Activated B cell treated with CpG ODN at 0.5 μM for 24 hours (primary cell): ENCODE measurements at regions of chr2 and their contacts with region 1.

Region 1: DNA sequence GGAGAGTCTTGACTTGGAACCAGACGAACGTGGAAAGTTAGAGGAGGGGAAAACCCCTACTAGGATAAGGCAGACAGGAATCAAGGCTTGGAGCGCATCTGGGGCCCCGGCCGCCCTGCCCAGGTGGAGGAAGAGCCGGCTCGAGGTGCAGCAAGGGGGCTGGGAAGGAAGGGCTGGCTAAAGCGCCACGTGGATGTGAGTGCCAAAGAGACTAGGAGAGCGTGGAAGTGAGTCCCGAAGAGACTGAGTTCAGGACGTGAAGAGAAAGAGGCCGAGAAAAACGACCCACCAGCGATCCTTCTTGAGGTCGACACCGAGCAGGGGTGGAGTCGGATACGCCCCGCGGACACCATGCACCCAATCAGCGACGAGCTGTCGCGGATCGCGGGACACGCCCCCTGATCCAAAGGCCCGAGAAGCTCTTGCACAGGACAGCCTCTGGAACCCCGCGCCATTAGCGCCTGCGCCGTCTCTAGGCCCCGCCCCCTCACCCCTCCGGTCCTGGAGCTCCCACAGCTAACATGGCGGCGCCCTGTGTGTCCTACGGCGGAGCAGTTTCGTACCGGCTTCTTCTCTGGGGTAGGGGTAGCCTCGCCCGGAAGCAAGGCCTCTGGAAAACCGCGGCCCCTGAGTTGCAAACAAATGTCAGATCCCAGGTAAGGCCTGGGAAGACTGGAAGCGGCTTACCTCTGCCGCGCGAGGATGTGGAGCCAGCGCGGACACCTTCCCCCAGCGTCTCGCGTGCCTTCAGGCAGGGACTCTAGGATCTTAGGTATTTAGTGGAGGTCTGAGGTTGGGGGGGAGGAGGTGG is at the start of gene MRPS9:
- DNase-seq: peak; percentile 92
- ATAC-seq: peak; percentile 98
- H3K4me3 Mint-ChIP-seq: peak within 1 kb of the TSS; percentile 99
- H3K27ac Mint-ChIP-seq: peak within 1 kb of the TSS; percentile 95
- H3K4me1 Mint-ChIP-seq: peaks cover 36% of the 10 kb centered on the region
- H3K27me3 Mint-ChIP-seq: no peaks in the 10 kb centered on the region
- CTCF ChIP-seq: no peak
- total RNA-seq, gene MRPS9: 26.5 and 29.1 TPM in 2 replicates

Region 2: DNA sequence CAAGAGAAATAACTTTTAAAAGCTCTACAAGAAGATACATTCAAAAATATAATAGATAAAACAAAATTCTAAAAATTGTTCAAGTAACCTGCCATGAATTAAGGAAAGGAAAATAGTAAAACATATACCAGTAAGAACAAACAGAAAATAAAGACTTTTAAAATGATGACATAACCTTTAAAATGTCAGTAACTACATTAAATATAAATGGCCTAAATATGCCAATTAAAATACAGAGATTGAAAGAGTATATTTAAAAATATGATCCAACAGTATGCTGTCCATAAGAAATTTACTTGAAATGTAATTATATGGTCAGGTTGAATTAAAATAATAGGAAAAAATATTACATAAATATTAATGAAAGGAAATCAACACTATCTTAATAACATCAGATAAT is 1095.6 kb before region 1 on chr2:
- CTCF ChIA-PET with region 1: no interaction called
- POLR2A ChIA-PET with region 1: no interaction called
- intact Hi-C with region 1: no loop called
- DNase-seq: no peak
- ATAC-seq: no peak
- H3K4me3 Mint-ChIP-seq: no peak overlapping the region
- H3K27ac Mint-ChIP-seq: no peak overlapping the region
- H3K4me1 Mint-ChIP-seq: no peaks in the 10 kb centered on the region
- H3K27me3 Mint-ChIP-seq: no peaks in the 10 kb centered on the region
- CTCF ChIP-seq: no peak

Region 3: GRCh38 chr2:104849618-104850141 is 188.1 kb before region 1 on chr2:
- CTCF ChIA-PET with region 1: no interaction called
- POLR2A ChIA-PET with region 1: no interaction called
- intact Hi-C with region 1: loop called (anchors 5 kb)
- DNase-seq: no peak
- ATAC-seq: no peak
- H3K4me3 Mint-ChIP-seq: no peak overlapping the region
- H3K27ac Mint-ChIP-seq: peak overlapping the region; percentile 14
- H3K4me1 Mint-ChIP-seq: peaks cover 30% of the 10 kb centered on the region
- H3K27me3 Mint-ChIP-seq: peaks cover 84% of the 10 kb centered on the region
- CTCF ChIP-seq: no peak

Region 4: DNA sequence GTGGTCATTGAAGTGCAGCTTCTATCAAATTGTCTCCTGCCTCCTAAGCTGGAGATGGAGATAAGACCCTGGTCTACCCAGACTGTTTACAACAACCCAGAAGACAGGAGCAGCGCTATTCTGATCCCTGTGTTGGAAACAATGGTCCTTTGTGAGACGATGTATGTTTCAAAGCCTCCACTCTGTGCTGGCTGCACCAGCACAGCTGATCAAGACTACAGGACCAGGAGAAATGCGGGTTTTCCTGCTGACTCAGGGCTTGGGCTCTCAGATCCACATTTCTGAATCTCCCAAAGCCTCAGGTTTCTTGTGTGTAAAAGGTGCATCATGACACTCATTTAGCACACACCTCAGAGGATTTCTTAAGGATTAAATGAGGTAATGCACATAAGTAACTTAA is 91.9 kb before region 1 on chr2:
- CTCF ChIA-PET with region 1: no interaction called
- POLR2A ChIA-PET with region 1: no interaction called
- intact Hi-C with region 1: no loop called
- DNase-seq: no peak
- ATAC-seq: no peak
- H3K4me3 Mint-ChIP-seq: no peak overlapping the region
- H3K27ac Mint-ChIP-seq: no peak overlapping the region
- H3K4me1 Mint-ChIP-seq: peaks cover 2% of the 10 kb centered on the region
- H3K27me3 Mint-ChIP-seq: peaks cover 12% of the 10 kb centered on the region
- CTCF ChIP-seq: no peak

Region 5: GRCh38 chr2:104983980-104984379 is 53.8 kb before region 1 on chr2:
- CTCF ChIA-PET with region 1: no interaction called
- POLR2A ChIA-PET with region 1: no interaction called
- intact Hi-C with region 1: no loop called
- DNase-seq: no peak
- ATAC-seq: no peak
- H3K4me3 Mint-ChIP-seq: no peak overlapping the region
- H3K27ac Mint-ChIP-seq: no peak overlapping the region
- H3K4me1 Mint-ChIP-seq: no peaks in the 10 kb centered on the region
- H3K27me3 Mint-ChIP-seq: peaks cover 8% of the 10 kb centered on the region
- CTCF ChIP-seq: no peak

Region 6: DNA sequence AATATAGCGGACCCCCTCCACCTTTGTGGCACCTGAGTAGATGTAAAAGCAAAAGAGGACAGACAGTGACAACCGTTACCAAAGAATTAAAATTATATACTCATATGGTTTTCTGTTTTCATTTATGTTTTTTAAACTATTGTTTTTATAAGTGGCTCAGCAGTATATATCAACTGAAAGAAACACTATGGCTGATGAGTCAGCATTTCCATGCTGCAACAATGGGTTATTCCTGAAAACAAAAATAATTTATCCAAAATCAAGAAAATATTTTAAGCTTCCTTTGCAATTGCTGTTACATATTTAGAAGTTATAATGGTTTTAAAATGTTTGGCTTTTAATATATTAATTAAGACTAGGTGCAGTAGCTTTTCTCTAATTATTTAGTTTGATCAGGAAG is 17.8 kb after region 1 on chr2:
- CTCF ChIA-PET with region 1: no interaction called
- POLR2A ChIA-PET with region 1: no interaction called
- intact Hi-C with region 1: loop called (anchors 2 kb)
- DNase-seq: no peak
- ATAC-seq: no peak
- H3K4me3 Mint-ChIP-seq: no peak overlapping the region
- H3K27ac Mint-ChIP-seq: no peak overlapping the region
- H3K4me1 Mint-ChIP-seq: peaks cover 8% of the 10 kb centered on the region
- H3K27me3 Mint-ChIP-seq: no peaks in the 10 kb centered on the region
- CTCF ChIP-seq: no peak

Region 7: DNA sequence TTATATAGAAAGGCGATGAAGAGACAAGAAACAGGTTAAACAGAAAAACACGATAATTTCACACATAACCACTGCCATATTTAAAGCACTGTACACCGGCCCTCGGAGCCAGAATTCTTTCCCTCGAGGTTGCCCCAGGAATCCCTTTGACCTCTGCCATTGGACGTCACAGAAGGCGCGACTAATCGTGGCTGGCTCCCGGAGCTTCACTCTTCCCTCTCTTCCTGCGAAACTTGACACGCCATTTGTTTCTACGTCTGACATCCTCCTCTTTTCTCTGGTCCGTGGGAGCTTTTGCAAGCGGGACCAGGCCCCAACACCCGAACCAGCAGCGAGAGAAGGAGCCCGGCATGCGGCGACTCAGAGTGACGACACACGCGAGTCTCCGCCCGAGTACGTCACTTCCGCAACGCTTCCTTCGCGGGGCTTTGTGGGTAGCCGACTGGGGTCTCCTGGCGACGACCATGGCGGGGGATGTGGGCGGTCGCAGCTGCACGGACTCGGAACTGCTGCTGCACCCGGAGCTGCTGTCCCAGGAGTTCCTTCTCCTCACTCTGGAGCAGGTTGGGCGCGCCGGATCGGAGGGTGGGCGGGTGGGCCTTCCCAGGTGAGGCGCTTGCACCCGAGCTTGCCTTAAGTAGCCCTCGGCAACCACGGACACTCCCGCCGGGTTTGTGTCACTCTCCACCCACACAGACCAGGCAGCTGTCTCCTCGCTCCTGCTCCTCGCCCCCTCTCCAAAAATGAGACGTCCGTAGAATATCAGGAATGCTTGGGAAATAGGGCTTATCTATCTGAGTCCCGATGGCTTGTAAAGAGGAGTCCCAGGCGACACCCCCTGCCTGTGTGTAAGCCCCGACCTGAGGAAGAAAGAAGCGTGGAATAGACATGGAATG is 299.6 kb after region 1 on chr2 and contains the start of gene C2orf49:
- CTCF ChIA-PET with region 1: no interaction called
- POLR2A ChIA-PET with region 1: no interaction called
- intact Hi-C with region 1: loop called (anchors 5 kb)
- DNase-seq: peak; percentile 89
- ATAC-seq: peak; percentile 93
- H3K4me3 Mint-ChIP-seq: peak within 1 kb of the TSS; percentile 100
- H3K27ac Mint-ChIP-seq: peak within 1 kb of the TSS; percentile 100
- H3K4me1 Mint-ChIP-seq: peaks cover 32% of the 10 kb centered on the region
- H3K27me3 Mint-ChIP-seq: no peaks in the 10 kb centered on the region
- CTCF ChIP-seq: no peak
- total RNA-seq, gene C2orf49: 20.0 and 23.8 TPM in 2 replicates